Gastrocnemius medialis (tissue), 4 donors: ENCODE measurements at regions of chr4 and their contacts with region 1.

Region 1: GRCh38 chr4:6716018-6716911 is at the start of gene BLOC1S4:
- DNase-seq: peak; percentile 81 to 86
- ATAC-seq: peak; percentile 87 to 88
- H3K4me3 ChIP-seq: peak within 1 kb of the TSS; percentile 75 to 89 (median 80)
- H3K27ac ChIP-seq: peak within 1 kb of the TSS; percentile 85 to 95 (median 92)
- H3K4me1 ChIP-seq: peaks cover 27 to 28% of the 10 kb centered on the region in 2 donors
- H3K27me3 ChIP-seq: no peaks in the 10 kb centered on the region
- CTCF ChIP-seq: peak in 3 of 5 experiments; percentile 30 to 36 (median 34)
- POLR2A ChIP-seq: peak; percentile 85 to 95
- total RNA-seq, gene BLOC1S4: 15.7 to 25.7 (median 22.3) TPM

Region 2: GRCh38 chr4:6633041-6633906 is 83.0 kb before region 1 on chr4:
- in situ Hi-C with region 1: no loop called
- intact Hi-C with region 1: no loop called
- DNase-seq: peak; percentile 24 to 66
- ATAC-seq: peak; percentile 77 to 94
- H3K4me3 ChIP-seq: no peak overlapping the region
- H3K27ac ChIP-seq: peak overlapping the region in 2 of 4 donors; percentile 5 to 87
- H3K4me1 ChIP-seq: peaks cover 0 to 19% of the 10 kb centered on the region in 2 donors
- H3K27me3 ChIP-seq: no peaks in the 10 kb centered on the region
- CTCF ChIP-seq: no peak
- POLR2A ChIP-seq: no peak

Region 3: GRCh38 chr4:6772223-6772928 is 56.1 kb after region 1 on chr4:
- in situ Hi-C with region 1: loop called in 1 of 4 experiments (anchors 5 kb)
- intact Hi-C with region 1: loop called (anchors 2 kb)
- DNase-seq: no peak
- ATAC-seq: no peak
- H3K4me3 ChIP-seq: no peak overlapping the region
- H3K27ac ChIP-seq: peak overlapping the region; percentile 80 to 92 (median 88)
- H3K4me1 ChIP-seq: peaks cover 38 to 53% of the 10 kb centered on the region in 2 donors
- H3K27me3 ChIP-seq: no peaks in the 10 kb centered on the region
- CTCF ChIP-seq: no peak
- POLR2A ChIP-seq: no peak

Region 4: DNA sequence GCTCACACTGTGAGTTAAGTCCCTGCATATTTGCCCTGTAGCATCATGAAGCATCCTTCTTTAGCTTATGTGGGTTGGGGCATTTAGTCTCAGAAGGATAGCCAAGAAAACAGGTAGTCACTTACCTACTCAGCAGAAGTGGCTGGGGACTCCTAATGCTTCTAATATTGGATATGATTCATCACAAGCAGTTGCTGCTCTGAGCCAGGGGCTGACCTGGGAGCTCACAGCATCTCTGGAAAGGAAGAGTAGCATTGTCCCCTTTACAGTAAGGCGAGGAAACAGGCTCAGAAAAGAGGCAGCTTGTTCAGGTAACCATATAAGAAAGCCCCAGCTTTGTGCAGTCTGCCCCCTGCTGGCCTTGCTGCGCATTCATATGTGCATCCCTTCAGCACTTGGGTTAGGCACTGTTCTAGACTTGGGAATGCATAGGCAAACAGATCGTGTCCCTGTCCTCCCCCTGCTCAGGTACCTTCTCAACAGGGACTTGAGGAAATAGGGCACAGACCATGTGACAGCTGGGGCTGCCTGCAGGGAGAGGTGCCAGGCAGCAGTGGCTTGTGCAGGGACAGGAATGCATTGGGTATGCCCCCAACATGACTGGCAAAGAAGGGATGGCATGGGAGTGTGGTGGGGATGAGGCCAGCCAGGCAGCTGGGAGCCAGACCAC is 157.7 kb after region 1 on chr4:
- in situ Hi-C with region 1: loop called in 3 of 4 experiments (anchors 10 kb)
- intact Hi-C with region 1: loop called (anchors 1 kb)
- DNase-seq: peak; percentile 45 to 73
- ATAC-seq: peak; percentile 32 to 37
- H3K4me3 ChIP-seq: no peak overlapping the region
- H3K27ac ChIP-seq: peak overlapping the region; percentile 80 to 90 (median 84)
- H3K4me1 ChIP-seq: peaks cover 42 to 58% of the 10 kb centered on the region in 2 donors
- H3K27me3 ChIP-seq: no peaks in the 10 kb centered on the region
- CTCF ChIP-seq: peak; percentile 70 to 88 (median 84)
- POLR2A ChIP-seq: no peak

Region 5: GRCh38 chr4:6974138-6974848 is 258.0 kb after region 1 on chr4:
- in situ Hi-C with region 1: no loop called
- intact Hi-C with region 1: loop called (anchors 1 kb)
- DNase-seq: peak; percentile 56 to 76
- ATAC-seq: peak; percentile 77 to 87
- H3K4me3 ChIP-seq: no peak overlapping the region
- H3K27ac ChIP-seq: peak overlapping the region; percentile 4 to 88 (median 80)
- H3K4me1 ChIP-seq: peaks cover 36 to 37% of the 10 kb centered on the region in 2 donors
- H3K27me3 ChIP-seq: no peaks in the 10 kb centered on the region
- CTCF ChIP-seq: peak; percentile 95 to 98 (median 96)
- POLR2A ChIP-seq: no peak

Region 6: DNA sequence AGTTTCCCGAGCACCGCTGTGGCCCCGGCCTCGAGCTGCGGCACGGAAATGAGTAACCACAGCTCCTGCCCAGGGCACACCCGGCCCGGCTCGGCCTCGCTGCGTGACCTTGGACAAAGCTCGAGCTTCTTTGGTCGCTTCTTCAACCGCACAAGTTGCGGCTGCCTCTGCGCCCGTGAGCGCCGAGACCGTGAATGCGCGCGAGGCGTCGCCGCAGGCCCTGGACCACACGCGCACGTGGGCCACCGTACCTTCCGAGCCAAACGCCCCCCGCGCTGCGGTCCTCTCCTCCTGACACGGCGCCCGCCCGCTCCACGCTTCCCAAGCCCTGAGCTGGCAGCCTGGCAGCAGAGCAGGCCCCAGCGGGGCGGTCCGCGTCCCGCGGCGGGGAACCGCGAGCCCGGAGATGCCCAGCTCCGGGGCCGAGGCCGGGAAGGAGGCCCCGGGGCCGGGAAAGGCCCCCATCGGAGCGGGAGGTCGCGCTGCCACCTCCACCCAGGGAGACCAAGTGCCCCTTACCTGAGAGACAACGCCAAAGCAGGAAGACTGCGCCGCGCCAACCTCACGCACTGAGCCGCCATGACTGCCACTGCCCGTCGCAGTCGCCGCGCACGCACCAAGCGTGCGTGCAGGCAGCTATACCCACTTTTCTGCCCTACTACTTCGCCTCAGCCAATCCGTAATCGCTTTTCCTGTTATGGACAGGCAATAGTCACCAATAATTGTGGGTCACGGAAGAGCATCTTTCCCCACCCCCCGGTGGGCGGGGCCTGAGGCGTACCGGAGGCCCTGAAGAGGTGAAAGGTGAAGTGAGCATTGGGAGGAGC is 351.4 kb after region 1 on chr4 and contains the start of gene GRPEL1:
- in situ Hi-C with region 1: loop called (anchors 5 to 10 kb)
- intact Hi-C with region 1: loop called (anchors 1 kb)
- DNase-seq: peak; percentile 98 to 100
- ATAC-seq: peak; percentile 95 to 98
- H3K4me3 ChIP-seq: peak within 1 kb of the TSS; percentile 81 to 99 (median 86)
- H3K27ac ChIP-seq: peak within 1 kb of the TSS; percentile 89 to 98 (median 96)
- H3K4me1 ChIP-seq: peaks cover 31 to 33% of the 10 kb centered on the region in 2 donors
- H3K27me3 ChIP-seq: no peaks in the 10 kb centered on the region
- CTCF ChIP-seq: peak in 1 of 5 experiments; percentile 23
- POLR2A ChIP-seq: peak; percentile 99
- total RNA-seq, gene GRPEL1: 28.8 to 58.0 (median 35.8) TPM